Dendritic cell treated with granulocyte-macrophage colony-stimulating factor and Interleukin-4, amounts not matched to agents 40 ng/mL and 50 ng/mL, for 4 days (primary cell): ENCODE measurements at regions of chr12 and their contacts with region 1.

Region 1: GRCh38 chr12:49842519-49843352 is at the start of gene BCDIN3D:
- H3K4me3 Mint-ChIP-seq: peak within 1 kb of the TSS; percentile 84
- H3K27ac Mint-ChIP-seq: peak within 1 kb of the TSS; percentile 93
- H3K4me1 Mint-ChIP-seq: peaks cover 35% of the 10 kb centered on the region
- H3K27me3 Mint-ChIP-seq: peaks cover 3% of the 10 kb centered on the region

Region 2: GRCh38 chr12:49776413-49776812 is 66.3 kb before region 1 on chr12:
- intact Hi-C with region 1: loop called (anchors 1 kb)
- H3K4me3 Mint-ChIP-seq: no peak overlapping the region
- H3K27ac Mint-ChIP-seq: no peak overlapping the region
- H3K4me1 Mint-ChIP-seq: peaks cover 18% of the 10 kb centered on the region
- H3K27me3 Mint-ChIP-seq: peaks cover 16% of the 10 kb centered on the region

Region 3: DNA sequence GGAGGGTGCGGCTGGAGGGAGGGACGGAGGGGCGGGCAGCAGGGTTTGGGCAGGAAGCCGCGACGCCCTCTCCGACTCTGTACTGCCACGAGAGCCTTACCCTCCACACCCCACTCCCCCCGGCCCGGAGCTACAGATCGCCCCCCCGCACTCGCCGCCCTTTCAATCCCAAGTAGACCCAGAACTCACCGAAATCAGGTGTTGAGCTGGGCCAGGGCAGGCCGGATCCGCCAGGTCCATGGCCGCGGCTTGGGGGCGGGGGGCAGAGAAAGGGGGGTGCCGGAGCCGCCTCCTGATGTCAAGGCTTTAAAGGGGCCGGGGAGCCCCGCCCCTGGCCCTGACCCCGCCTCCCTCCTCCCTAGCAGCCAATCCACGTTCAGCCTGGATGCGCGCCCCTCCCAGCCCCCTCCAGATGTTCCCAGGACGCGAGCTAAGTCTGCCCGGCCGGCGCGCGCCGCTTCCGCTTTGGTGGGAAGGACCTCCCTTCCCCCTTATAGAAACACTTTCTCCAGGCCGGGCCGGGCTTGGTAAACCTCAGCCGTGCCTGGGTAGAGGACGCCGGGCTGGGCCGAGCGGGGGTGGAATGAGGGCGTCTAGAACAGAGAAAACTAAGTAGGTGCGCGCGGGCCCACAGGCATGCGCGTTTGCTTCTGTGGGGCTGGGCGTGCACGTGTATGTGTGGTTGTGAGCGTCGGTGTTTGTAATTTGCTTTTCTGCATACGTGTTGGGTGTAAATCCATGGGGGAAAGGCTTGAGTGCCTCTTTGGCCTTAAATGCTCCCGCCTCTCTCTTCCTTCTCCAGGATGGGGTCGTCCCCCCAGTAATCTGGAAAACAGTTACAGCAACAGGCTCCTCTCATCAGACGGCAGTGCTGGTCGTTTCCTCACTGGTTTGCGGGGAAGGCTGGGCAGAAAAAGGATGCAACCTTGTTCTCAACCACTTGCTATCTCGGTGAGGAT is 14.3 kb before region 1 on chr12 and contains the start of gene NCKAP5L:
- intact Hi-C with region 1: loop called (anchors 1 kb)
- H3K4me3 Mint-ChIP-seq: peak within 1 kb of the TSS; percentile 99
- H3K27ac Mint-ChIP-seq: peak within 1 kb of the TSS; percentile 100
- H3K4me1 Mint-ChIP-seq: peaks cover 54% of the 10 kb centered on the region
- H3K27me3 Mint-ChIP-seq: no peaks in the 10 kb centered on the region

Region 4: DNA sequence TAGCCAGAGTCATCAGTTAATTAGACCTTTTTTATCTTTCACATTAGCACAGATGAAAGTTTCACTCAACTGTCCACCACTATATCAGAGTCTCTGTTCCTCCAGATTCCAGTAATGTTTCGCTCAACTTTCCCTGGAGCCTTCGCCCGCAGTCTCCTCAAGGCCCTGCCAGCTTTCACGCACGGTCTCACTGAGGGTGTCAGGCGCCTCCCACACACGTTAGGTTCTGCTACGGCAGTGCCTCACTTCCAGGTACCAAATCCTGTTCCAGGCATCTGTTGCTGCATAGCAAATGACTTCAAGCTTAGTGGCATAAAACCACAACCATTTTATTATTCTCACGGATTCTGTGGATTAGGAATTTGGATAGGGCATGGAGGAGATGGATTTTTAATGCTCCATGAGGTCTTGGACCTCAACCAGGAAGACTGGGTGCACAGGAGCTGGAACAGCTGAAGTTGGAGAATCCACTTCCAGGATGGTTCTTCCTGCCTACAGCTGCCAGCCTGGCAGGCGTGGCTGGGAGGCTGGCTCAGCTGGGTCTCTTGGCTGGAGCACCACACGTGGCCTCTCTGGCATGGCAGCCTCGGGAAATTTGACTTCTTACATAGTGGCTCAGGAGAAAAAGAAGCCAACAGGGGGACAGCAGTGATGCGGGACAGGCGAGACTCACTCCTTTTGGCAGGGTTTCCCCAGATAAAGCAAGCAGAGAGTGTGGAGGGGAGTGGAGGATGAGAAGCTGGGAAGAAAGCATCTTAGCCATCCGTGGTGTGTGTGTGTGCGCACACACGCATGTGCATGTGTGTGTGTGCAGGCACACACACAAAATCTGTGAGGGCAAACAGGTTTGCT is 21.4 kb after region 1 on chr12:
- intact Hi-C with region 1: no loop called
- H3K4me3 Mint-ChIP-seq: no peak overlapping the region
- H3K27ac Mint-ChIP-seq: no peak overlapping the region
- H3K4me1 Mint-ChIP-seq: no peaks in the 10 kb centered on the region
- H3K27me3 Mint-ChIP-seq: peaks cover 34% of the 10 kb centered on the region